ENCODE measurements at regions of chr14 and their contacts with region 1.

Region 1: DNA sequence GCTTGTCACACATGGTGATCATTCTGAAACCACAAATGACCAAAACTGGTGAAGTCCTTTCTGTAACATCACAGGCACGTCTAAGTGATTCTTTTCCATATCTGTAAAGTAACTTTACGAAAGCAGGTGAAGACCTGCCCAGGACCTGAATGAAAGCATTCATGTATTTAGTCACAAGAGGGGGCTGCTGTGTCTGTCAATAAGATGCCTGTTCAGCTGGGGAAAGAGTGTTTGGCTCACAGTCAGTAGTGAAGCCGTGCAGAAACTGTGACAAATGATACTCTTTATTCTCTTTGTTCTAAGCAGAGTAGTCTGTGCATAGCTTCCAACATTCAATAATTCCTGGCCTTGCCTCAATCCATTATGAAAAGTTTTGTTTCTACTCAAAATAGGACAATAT is 373.5 kb upstream of the OR4E1 start:
- DNase-seq: peak in 5 of 9 experiments; percentile 19 to 77 (median 38)
- ATAC-seq: peak; percentile 90
- H3K4me3 ChIP-seq: no peak overlapping the region
- H3K4me3 Mint-ChIP-seq: peak overlapping the region; percentile 58
- H3K27ac ChIP-seq: peak overlapping the region; percentile 15 to 19
- H3K27ac Mint-ChIP-seq: peak overlapping the region; percentile 92
- H3K4me1 ChIP-seq: peaks cover 14% of the 10 kb centered on the region
- H3K4me1 Mint-ChIP-seq: peaks cover 44% of the 10 kb centered on the region
- H3K27me3 ChIP-seq: no peaks in the 10 kb centered on the region
- H3K27me3 Mint-ChIP-seq: no peaks in the 10 kb centered on the region
- CTCF ChIP-seq: peak; percentile 35

Region 2: DNA sequence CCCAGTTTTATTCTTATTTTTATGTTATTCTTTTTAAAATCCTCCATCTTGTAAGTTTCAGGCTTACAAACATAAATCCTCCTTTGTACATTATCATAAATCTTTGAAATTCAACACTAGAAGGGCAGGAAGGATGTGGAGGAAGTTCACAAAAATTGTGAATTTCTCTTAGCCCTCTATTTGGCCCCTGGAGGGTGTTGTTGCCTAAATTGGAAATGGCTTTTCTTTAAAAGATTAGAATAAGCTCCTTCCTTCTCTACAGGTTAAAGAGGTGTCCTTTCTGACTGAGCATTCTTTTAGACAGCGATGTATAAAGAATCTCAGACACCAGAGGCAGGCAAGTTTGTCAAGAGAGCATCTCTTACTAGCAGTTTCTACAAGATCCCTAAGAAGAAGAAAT is 18.2 kb after region 1 on chr14:
- CTCF ChIA-PET with region 1: interaction called, 11 read pairs
- POLR2A ChIA-PET with region 1: interaction called, 11 read pairs
- intact Hi-C with region 1: no loop called
- DNase-seq: peak in 1 of 9 experiments; percentile 26
- ATAC-seq: peak; percentile 26
- H3K4me3 ChIP-seq: no peak overlapping the region
- H3K4me3 Mint-ChIP-seq: peak overlapping the region; percentile 36
- H3K27ac ChIP-seq: no peak overlapping the region
- H3K27ac Mint-ChIP-seq: peak overlapping the region; percentile 37
- H3K4me1 ChIP-seq: peaks cover 18% of the 10 kb centered on the region
- H3K4me1 Mint-ChIP-seq: peaks cover 31% of the 10 kb centered on the region
- H3K27me3 ChIP-seq: no peaks in the 10 kb centered on the region
- H3K27me3 Mint-ChIP-seq: no peaks in the 10 kb centered on the region
- CTCF ChIP-seq: no peak